GM12878 (cell line): ENCODE measurements at regions of chr5 and their contacts with region 1.

Region 1: DNA sequence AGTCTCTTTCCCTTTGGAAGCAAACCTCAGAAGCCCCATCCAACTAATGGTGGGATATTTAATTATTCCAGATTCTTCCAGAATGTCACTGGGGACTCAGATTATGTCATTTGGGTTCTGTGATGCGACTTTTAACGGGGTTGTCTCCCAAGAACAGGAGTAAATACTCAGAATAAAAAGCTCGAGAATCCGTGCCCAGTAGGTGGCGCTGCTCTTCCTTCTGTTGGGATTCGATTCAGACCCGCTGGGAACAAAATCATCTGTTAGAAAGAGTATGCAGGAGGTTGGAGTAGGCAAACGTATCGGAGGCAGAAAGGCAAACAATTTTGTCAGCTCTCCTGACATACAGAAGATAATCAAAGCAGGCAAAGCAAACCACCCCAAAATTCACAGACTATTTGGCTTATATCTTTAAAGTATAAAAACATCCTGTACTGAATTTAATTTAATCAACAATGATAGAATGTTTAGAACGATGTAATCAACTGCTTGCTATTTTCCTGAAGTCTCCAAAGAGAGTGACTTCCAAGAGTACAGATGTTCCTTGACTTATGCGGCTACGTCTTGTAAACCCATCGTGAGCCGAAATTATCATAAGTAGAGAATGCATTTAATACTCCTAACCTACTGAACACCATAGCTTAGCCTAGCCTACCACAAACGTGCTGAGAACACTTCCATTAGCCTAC is 169.8 kb upstream of the RAI14 start:
- DNase-seq: no peak
- ATAC-seq: peak; percentile 83
- H3K4me3 ChIP-seq: no peak overlapping the region
- H3K27ac ChIP-seq: no peak overlapping the region
- H3K4me1 ChIP-seq: no peaks in the 10 kb centered on the region
- H3K27me3 ChIP-seq: no peaks in the 10 kb centered on the region; a peak in 1 of 4 replicates
- CTCF ChIP-seq: peak; percentile 74 to 92 (median 80)
- EP300 ChIP-seq: no peak
- POLR2A ChIP-seq: no peak
- RAD21 ChIP-seq: peak; percentile 97

Region 2: GRCh38 chr5:34474573-34475021 is 11.7 kb before region 1 on chr5:
- CTCF ChIA-PET with region 1: interaction called, 27 read pairs
- POLR2A ChIA-PET with region 1: no interaction called
- RAD21 ChIA-PET with region 1: interaction called, 9 read pairs
- SMC1A ChIA-PET with region 1: interaction called, 10 read pairs
- in situ Hi-C with region 1: no loop called
- intact Hi-C with region 1: no loop called
- DNase-seq: no peak
- ATAC-seq: peak; percentile 76
- H3K4me3 ChIP-seq: no peak overlapping the region
- H3K27ac ChIP-seq: no peak overlapping the region
- H3K4me1 ChIP-seq: no peaks in the 10 kb centered on the region
- H3K27me3 ChIP-seq: peaks cover 0 to 2% of the 10 kb centered on the region in 2 experiments; a peak in 2 of 4 replicates
- CTCF ChIP-seq: peak; percentile 60 to 92 (median 87)
- EP300 ChIP-seq: no peak
- POLR2A ChIP-seq: no peak
- RAD21 ChIP-seq: peak; percentile 90

Region 3: DNA sequence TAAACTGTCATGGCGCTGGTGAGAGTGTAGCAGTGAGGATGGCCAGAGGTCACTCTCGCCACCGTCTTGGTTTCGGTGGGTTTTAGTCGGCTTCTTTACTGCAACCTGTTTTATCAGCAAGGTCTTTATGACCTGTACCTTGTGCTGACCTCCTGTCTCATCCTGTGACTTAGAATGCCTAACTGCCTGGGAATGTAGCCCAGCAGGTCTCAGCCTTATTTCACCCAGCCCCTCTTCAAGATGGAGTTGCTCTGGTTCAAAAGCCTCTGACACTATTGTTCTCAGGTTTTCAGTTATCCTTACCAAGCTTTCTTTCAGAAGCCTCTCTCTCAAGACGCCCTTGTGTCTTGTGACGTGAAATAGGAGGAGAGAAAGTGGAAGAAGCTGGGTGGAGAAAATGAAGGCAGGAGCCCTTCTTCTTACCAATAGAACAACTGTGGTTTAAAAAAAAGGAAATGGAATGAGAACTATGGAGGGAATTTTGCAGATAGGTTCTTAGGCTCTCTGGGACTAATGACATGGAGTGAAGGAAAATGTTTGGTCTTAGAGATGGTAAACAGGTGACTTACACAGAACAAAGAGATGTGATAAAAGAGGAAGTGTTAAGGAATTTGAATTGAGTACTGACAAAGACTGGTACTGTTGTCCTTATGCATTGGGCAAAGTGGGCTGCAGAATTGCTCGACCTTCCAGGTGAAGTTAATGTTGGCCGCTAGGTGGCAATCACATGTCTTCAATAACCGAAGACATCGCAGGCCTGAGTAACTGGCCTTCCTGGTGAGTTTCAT is 36.5 kb after region 1 on chr5:
- CTCF ChIA-PET with region 1: interaction called, 18 read pairs
- POLR2A ChIA-PET with region 1: no interaction called
- RAD21 ChIA-PET with region 1: interaction called, 9 read pairs
- SMC1A ChIA-PET with region 1: interaction called, 13 read pairs
- in situ Hi-C with region 1: no loop called
- intact Hi-C with region 1: loop called (anchors 2 kb)
- DNase-seq: no peak
- ATAC-seq: peak; percentile 98
- H3K4me3 ChIP-seq: no peak overlapping the region
- H3K27ac ChIP-seq: no peak overlapping the region
- H3K4me1 ChIP-seq: no peaks in the 10 kb centered on the region
- H3K27me3 ChIP-seq: no peaks in the 10 kb centered on the region
- CTCF ChIP-seq: peak; percentile 65 to 78 (median 72); a peak in 5 of 6 replicates
- EP300 ChIP-seq: no peak
- POLR2A ChIP-seq: no peak
- RAD21 ChIP-seq: peak; percentile 87

Region 4: GRCh38 chr5:34533582-34534522 is 47.5 kb after region 1 on chr5:
- CTCF ChIA-PET with region 1: interaction called, 47 read pairs
- POLR2A ChIA-PET with region 1: no interaction called
- RAD21 ChIA-PET with region 1: interaction called, 21 read pairs
- SMC1A ChIA-PET with region 1: interaction called, 9 read pairs
- in situ Hi-C with region 1: no loop called
- intact Hi-C with region 1: loop called (anchors 2 kb)
- DNase-seq: no peak
- ATAC-seq: peak; percentile 74
- H3K4me3 ChIP-seq: no peak overlapping the region
- H3K27ac ChIP-seq: peak overlapping the region; percentile 42
- H3K4me1 ChIP-seq: peaks cover 21% of the 10 kb centered on the region
- H3K27me3 ChIP-seq: no peaks in the 10 kb centered on the region; a peak in 1 of 4 replicates
- CTCF ChIP-seq: no peak
- EP300 ChIP-seq: no peak
- POLR2A ChIP-seq: no peak
- RAD21 ChIP-seq: no peak

Region 5: GRCh38 chr5:34639852-34640605 is 153.7 kb after region 1 on chr5:
- CTCF ChIA-PET with region 1: no interaction called
- POLR2A ChIA-PET with region 1: no interaction called
- RAD21 ChIA-PET with region 1: interaction called, 3 read pairs
- SMC1A ChIA-PET with region 1: no interaction called
- in situ Hi-C with region 1: no loop called
- intact Hi-C with region 1: loop called (anchors 10 kb)
- DNase-seq: no peak
- ATAC-seq: no peak
- H3K4me3 ChIP-seq: no peak overlapping the region
- H3K27ac ChIP-seq: no peak overlapping the region
- H3K4me1 ChIP-seq: no peaks in the 10 kb centered on the region
- H3K27me3 ChIP-seq: no peaks in the 10 kb centered on the region
- CTCF ChIP-seq: no peak
- EP300 ChIP-seq: no peak
- POLR2A ChIP-seq: no peak
- RAD21 ChIP-seq: no peak

Region 6: DNA sequence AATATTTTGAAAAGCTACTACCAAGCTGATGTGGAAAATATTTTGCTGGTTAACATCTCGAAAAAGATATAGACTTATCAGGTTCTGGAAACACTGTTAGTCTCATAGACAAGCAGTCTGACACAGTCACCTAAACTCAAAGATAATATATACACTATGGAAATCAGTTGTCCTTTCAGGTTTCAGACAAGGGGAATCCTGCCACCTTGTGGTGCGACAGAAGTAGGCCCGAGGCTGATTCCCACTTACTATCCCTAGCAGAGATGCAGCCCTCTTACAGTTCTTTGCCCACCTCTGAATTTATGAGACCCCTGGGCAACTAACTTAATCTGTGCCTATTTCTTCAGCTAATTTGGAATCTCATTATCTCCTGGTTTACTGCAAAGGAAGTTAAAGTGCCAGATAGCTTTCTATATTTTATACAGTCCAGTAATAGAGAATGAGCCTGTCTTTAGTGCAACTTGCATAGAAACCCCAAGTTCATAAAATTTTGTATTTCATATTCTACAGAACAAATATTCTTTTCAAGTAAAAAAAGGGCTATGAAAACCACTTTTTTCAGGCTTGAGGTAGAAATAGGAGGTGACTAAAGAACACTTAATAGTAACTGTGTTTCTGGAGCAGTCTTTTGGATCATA is 412.1 kb after region 1 on chr5:
- CTCF ChIA-PET with region 1: interaction called, 39 read pairs
- POLR2A ChIA-PET with region 1: no interaction called
- RAD21 ChIA-PET with region 1: interaction called, 6 read pairs
- SMC1A ChIA-PET with region 1: interaction called, 19 read pairs
- in situ Hi-C with region 1: loop called (anchors 25 kb)
- intact Hi-C with region 1: loop called (anchors 1 kb)
- DNase-seq: no peak
- ATAC-seq: peak; percentile 94
- H3K4me3 ChIP-seq: no peak overlapping the region
- H3K27ac ChIP-seq: no peak overlapping the region
- H3K4me1 ChIP-seq: no peaks in the 10 kb centered on the region
- H3K27me3 ChIP-seq: no peaks in the 10 kb centered on the region
- CTCF ChIP-seq: peak; percentile 77 to 82 (median 79)
- EP300 ChIP-seq: no peak
- POLR2A ChIP-seq: no peak
- RAD21 ChIP-seq: peak; percentile 90

Region 7: DNA sequence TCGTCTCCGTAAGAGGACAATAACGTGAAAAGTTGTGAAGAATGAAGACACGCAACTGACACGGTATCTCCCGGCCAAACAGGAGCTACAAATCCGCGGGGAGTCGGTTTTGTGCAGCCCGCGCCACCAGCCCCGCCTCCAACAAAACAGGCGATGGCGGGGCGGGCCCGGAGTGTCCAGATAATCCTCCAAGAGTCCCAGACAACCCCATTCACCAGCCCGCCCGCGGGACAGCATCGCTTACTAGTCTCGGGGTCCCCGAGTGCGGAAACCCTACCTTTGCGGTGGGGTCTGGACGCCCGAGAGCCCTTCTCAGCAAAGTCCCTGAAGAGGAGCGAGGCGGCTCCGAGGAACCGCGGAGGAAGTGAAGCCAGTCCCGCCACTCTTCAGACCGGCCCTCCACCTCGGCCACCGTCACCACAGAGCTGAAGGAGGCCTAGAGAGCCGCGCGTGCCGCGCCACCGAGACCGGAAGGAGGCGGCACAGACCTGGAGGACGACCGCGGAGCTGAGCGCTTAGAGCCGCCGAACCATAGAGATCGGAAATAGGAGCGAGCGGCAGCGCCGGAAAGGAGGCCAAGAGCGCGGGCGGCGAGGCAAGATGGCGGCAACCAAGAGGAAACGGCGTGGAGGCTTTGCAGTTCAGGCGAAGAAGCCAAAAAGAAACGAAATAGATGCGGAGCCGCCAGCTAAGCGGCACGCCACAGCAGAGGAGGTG is 429.0 kb after region 1 on chr5 and contains the starts of genes BRIX1 and RAD1:
- CTCF ChIA-PET with region 1: interaction called, 6 read pairs
- POLR2A ChIA-PET with region 1: no interaction called
- RAD21 ChIA-PET with region 1: interaction called, 7 read pairs
- SMC1A ChIA-PET with region 1: no interaction called
- in situ Hi-C with region 1: loop called (anchors 25 kb)
- intact Hi-C with region 1: no loop called
- DNase-seq: peak; percentile 86
- ATAC-seq: peak; percentile 96
- H3K4me3 ChIP-seq: peak within 1 kb of the TSS; percentile 100
- H3K27ac ChIP-seq: peak within 1 kb of the TSS; percentile 90
- H3K4me1 ChIP-seq: peaks cover 6% of the 10 kb centered on the region; the same call in 1 of the 2 replicates
- H3K27me3 ChIP-seq: no peaks in the 10 kb centered on the region
- CTCF ChIP-seq: peak in 2 of 3 experiments; percentile 12 to 43; a peak in 3 of 6 replicates
- EP300 ChIP-seq: 0 out of 4 replicates have a peak, but pooled peaks of 1 of the 2 experiments have one; percentile 35
- POLR2A ChIP-seq: peak; percentile 90
- RAD21 ChIP-seq: no peak
- polyA plus RNA-seq, gene BRIX1: 58.2 to 77.4 TPM
- polyA plus RNA-seq, gene RAD1: 43.4 to 58.4 TPM